CD8-positive, alpha-beta memory T cell (primary cell): ENCODE measurements at regions of chr19 and their contacts with region 1.

Region 1: DNA sequence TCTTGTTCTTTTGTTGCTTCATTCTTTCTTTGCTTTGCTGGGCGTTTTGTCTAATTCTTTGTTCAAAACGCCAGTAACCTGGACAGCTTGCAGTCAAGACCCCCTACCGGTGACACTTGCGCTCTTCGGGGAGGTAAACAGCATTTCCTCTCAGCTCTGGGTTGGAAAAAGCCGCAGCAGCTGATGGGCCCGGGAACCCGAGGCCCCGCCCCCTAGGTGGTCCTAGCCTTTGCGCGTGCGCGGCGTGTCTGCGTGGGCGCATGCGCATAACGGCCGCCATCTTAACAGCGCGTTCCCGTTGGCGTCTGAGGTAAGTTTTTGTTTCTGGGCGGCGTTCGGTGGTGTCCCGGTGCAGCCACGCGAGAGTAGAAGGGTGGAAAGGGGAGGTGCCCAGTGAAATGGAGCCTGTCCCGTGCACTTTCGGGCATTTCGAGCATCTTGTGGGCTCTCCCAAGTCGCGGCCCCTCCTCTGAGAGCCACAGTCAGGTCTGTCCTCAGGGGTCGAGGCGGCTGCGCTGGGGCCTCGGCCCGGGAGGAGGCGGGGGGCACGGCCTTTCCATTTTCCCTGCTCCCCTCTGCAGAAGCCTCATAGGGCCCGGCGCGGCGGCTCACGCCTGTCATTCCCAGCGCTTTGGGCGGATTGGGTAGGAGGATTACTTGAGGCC is at the start of gene ZNF559:
- DNase-seq: peak; percentile 96 to 98 (median 97)
- H3K4me3 ChIP-seq: peak within 1 kb of the TSS; percentile 67
- H3K4me3 Mint-ChIP-seq: peak within 1 kb of the TSS; percentile 90 to 96 (median 95)
- H3K27ac ChIP-seq: peak within 1 kb of the TSS; percentile 83
- H3K27ac Mint-ChIP-seq: peak within 1 kb of the TSS; percentile 87 to 97 (median 94)
- H3K4me1 ChIP-seq: peaks cover 12% of the 10 kb centered on the region
- H3K4me1 Mint-ChIP-seq: peaks cover 31 to 48% (median 47%) of the 10 kb centered on the region in 3 donors
- H3K27me3 ChIP-seq: no peaks in the 10 kb centered on the region
- H3K27me3 Mint-ChIP-seq: peaks cover 0 to 2% of the 10 kb centered on the region in 2 donors
- total RNA-seq, gene ZNF559: 14.2 to 17.3 TPM

Region 2: DNA sequence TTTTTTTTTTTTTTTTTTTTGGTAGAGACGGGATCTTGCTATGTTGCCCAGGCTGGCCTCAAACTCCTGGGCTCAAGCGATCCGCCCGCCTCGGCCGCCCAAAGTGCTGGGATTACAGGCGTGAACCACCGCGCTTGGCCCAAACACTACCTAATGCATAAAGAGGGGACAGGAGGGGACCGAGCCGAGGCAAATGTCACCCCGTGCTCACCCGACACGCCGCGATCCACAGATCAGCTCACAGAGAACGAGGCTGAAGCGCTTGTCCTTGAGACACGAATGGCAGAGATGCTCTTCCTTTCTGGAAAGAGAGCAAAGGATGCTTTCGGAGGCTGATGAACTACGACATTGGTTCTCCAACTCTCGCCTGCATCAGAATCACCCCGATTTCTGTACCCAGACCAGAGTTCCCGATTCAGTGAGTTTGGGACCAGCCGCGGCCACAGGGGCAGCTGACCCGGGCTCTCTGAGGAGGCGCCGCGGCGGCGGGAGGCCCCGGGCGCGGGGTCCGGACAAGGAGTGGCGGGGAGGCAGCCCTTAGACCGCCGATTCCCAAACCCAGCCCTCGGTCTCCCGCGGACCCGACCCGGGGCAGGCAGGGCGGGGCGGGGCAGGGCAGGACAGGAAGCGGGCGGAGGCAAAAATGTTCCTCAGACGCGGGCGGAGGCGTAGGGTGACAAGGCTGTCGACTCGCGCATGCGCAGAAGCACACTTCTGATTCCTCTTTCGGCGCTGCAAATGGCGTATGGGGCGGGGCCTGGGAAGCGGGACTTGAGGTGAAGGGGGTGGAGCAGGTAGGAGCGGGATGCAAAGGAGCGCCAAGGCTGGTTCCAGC is 14.7 kb before region 1 on chr19 and contains the start of gene ZNF699:
- CTCF ChIA-PET with region 1: interaction called, 20 read pairs
- POLR2A ChIA-PET with region 1: interaction called, 14 read pairs
- DNase-seq: peak; percentile 97 to 99 (median 98)
- H3K4me3 ChIP-seq: peak within 1 kb of the TSS; percentile 99
- H3K4me3 Mint-ChIP-seq: peak within 1 kb of the TSS; percentile 86 to 99 (median 93)
- H3K27ac ChIP-seq: peak within 1 kb of the TSS; percentile 90
- H3K27ac Mint-ChIP-seq: peak within 1 kb of the TSS; percentile 86 to 97 (median 95)
- H3K4me1 ChIP-seq: peaks cover 18% of the 10 kb centered on the region
- H3K4me1 Mint-ChIP-seq: peaks cover 27 to 51% (median 47%) of the 10 kb centered on the region in 3 donors
- H3K27me3 ChIP-seq: no peaks in the 10 kb centered on the region
- H3K27me3 Mint-ChIP-seq: peaks cover 0 to 3% of the 10 kb centered on the region in 2 donors
- total RNA-seq, gene ZNF699: 5.5 to 5.9 TPM